K562 (cell line): ENCODE measurements at regions of chr5 and their contacts with region 1.

Region 1: DNA sequence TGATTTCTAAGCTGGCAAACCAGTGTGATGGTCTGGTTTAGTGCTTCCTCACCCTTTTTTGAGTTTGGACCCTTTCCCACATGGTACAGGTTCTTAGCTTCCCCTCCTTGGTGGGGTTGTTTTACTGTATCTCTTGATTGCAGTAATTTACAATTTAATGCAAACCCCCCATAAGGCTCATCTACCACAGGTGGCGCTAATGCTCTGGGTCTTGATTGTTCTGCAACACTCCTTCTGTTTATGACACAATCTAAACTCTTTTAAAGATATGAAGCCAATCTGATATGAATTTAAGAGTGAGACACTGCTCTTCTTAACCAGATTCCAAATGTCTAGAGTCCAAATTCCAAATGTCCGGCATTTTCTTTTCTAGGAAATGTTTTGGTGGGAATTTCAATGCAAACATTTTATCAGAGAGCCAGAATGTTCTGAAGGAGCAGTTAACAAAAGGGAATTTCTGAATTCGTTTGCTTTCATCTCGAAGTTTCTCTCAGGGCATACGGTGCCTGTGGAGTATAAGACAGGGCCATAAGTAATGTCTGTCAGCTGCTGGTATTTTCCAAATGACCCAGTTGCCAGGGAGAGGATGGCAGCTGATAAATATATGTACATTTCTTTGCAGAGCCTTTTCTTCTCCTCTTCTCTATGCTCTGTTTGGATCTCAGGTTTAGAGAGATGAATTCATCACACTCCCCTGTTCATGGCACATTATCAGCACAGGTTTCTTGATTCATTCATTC is 246.8 kb downstream of the ARHGAP26 start:
- DNase-seq: peak; percentile 17 to 55 (median 38)
- ATAC-seq: peak; percentile 79
- H3K4me3 ChIP-seq: no peak overlapping the region
- H3K27ac ChIP-seq: no peak overlapping the region
- H3K4me1 ChIP-seq: peaks cover 0 to 6% of the 10 kb centered on the region in 2 experiments; a peak in 2 of 5 replicates
- H3K27me3 ChIP-seq: no peaks in the 10 kb centered on the region
- CTCF ChIP-seq: peak; percentile 44 to 71 (median 69); a peak in 5 of 6 replicates
- EP300 ChIP-seq: no peak
- POLR2A ChIP-seq: no peak
- RAD21 ChIP-seq: peak; percentile 78 to 86

Region 2: GRCh38 chr5:144142139-144142823 is 1125.3 kb after region 1 on chr5:
- CTCF ChIA-PET with region 1: no interaction called
- POLR2A ChIA-PET with region 1: no interaction called
- in situ Hi-C with region 1: no loop called
- intact Hi-C with region 1: loop called (anchors 10 kb)
- DNase-seq: peak in 2 of 4 experiments; percentile 22 to 25
- ATAC-seq: peak; percentile 95
- H3K4me3 ChIP-seq: no peak overlapping the region
- H3K27ac ChIP-seq: no peak overlapping the region
- H3K4me1 ChIP-seq: no peaks in the 10 kb centered on the region
- H3K27me3 ChIP-seq: no peaks in the 10 kb centered on the region; a peak in 1 of 5 replicates
- CTCF ChIP-seq: peak; percentile 25 to 59 (median 53); a peak in 5 of 6 replicates
- EP300 ChIP-seq: no peak
- POLR2A ChIP-seq: no peak
- RAD21 ChIP-seq: peak; percentile 46 to 68

Region 3: DNA sequence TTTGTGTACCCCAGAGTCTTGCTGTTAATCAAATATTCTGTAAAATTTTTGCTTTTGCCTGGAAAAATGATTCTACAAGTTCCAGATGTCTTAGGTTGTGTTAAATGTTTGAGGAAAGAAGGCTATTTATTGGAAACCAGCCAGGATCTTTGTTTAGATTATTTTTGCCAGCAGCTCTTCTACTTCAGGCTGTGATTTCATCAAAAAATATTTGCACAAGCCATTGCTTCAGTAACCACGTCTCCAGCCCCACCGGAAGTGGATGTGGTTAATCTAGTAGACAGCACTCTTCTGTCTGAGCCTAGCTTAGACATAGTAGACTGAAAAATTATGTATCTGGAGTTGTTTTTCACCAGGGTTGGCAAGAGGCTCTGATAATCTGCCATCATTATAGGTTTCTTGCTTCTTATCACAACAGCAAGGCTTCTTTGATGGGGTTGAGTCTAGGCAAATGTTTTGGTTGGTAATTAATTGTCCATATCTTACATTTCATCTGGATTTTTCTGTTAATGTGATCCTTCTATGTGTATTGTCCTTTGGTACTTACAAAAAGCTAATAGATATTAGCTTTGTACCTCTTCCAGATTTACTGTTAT is 1170.8 kb after region 1 on chr5:
- CTCF ChIA-PET with region 1: no interaction called
- POLR2A ChIA-PET with region 1: no interaction called
- in situ Hi-C with region 1: no loop called
- intact Hi-C with region 1: loop called (anchors 10 kb)
- DNase-seq: no peak
- ATAC-seq: no peak
- H3K4me3 ChIP-seq: no peak overlapping the region
- H3K27ac ChIP-seq: no peak overlapping the region
- H3K4me1 ChIP-seq: no peaks in the 10 kb centered on the region
- H3K27me3 ChIP-seq: 0 out of 5 replicates have a peak, but pooled peaks cover 0 to 3% of the 10 kb centered on the region in 2 experiments
- CTCF ChIP-seq: no peak
- EP300 ChIP-seq: no peak
- POLR2A ChIP-seq: no peak
- RAD21 ChIP-seq: no peak